MCF 10A (cell line): ENCODE measurements at regions of chr3 and their contacts with region 1.

Region 1: DNA sequence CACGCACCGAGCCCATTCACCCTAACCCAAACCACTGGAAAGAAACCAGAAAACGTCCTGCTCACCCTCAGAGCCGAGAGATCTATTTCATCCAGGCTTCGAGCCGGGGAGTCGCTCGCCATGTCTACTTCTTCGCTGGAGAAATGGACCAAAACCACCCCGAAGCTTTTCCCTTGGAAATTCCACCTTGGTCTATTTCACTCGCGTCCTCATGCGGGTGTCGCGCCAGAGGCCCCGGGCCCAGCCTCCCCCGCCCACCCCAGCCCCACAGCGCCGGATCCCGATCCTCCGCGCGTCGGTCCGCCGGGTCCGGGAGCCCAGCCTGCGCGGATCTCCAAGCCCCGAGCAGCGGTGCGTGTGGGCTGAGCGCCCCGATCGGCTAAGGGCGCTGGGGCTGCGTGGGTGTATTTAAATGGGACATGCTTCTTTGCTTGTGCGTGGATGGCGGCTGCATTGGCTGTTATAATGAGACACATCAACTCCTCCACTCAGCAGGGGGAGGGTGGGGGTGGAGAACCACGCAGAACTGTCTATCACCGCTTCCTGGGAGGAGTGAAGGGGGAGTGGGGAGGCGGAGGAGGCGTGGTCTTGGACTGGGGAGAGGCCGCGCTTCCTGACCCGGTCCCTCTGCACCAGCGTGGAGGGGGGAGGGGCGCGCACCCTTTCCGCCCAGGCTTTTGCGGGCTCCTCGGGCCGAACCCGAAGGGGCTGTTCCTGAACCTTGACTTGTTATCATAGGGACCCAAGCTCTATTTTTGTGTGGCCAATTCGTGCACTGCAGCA is at the start of gene TNIK:
- DNase-seq: peak; percentile 88
- H3K4me3 Mint-ChIP-seq: peak within 1 kb of the TSS; percentile 90
- H3K27ac Mint-ChIP-seq: peak within 1 kb of the TSS; percentile 86
- H3K4me1 Mint-ChIP-seq: peaks cover 20% of the 10 kb centered on the region
- H3K27me3 Mint-ChIP-seq: no peaks in the 10 kb centered on the region
- CTCF ChIP-seq: peak; percentile 37
- total RNA-seq, gene TNIK: 3.4 and 4.3 TPM in 2 replicates

Region 2: GRCh38 chr3:170171563-170171962 is 1288.6 kb before region 1 on chr3:
- CTCF ChIA-PET with region 1: no interaction called
- POLR2A ChIA-PET with region 1: no interaction called
- intact Hi-C with region 1: no loop called
- DNase-seq: no peak
- H3K4me3 Mint-ChIP-seq: no peak overlapping the region
- H3K27ac Mint-ChIP-seq: no peak overlapping the region
- H3K4me1 Mint-ChIP-seq: peaks cover 6% of the 10 kb centered on the region
- H3K27me3 Mint-ChIP-seq: no peaks in the 10 kb centered on the region
- CTCF ChIP-seq: no peak

Region 3: DNA sequence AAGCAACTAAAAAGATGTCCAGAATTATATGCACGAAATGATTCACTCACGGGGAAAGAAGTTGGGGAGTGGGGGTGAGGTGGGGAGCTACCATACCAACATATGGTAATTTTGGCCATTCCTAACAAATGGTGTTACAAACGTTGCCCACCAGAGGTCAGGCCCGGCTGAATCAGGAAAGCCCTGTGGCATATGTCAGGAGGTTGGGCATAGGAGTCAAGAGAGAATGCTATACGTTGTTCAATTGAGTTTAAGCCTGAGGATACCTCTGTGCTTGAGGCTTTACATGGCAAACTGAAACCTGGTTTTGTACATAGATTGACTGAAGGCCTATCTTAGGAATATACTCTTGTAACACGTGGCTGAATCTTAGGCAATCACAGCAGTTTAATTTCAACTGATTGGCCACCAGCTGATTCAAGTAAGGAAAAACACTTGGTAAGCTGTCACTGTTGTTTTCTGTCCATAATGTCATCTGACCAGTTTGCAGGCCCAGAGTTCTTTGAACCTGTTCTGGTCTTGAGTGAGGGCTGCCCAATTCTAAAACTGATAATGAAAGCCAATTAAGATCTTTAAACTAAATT is 410.2 kb before region 1 on chr3:
- CTCF ChIA-PET with region 1: no interaction called
- POLR2A ChIA-PET with region 1: interaction called, 7 read pairs
- intact Hi-C with region 1: loop called (anchors 2 kb)
- DNase-seq: peak; percentile 77
- H3K4me3 Mint-ChIP-seq: no peak overlapping the region
- H3K27ac Mint-ChIP-seq: peak overlapping the region; percentile 11
- H3K4me1 Mint-ChIP-seq: peaks cover 8% of the 10 kb centered on the region
- H3K27me3 Mint-ChIP-seq: no peaks in the 10 kb centered on the region
- CTCF ChIP-seq: peak; percentile 79

Region 4: GRCh38 chr3:171284308-171285075 is 175.6 kb before region 1 on chr3:
- CTCF ChIA-PET with region 1: interaction called, 3 read pairs
- POLR2A ChIA-PET with region 1: interaction called, 36 read pairs
- intact Hi-C with region 1: loop called (anchors 1 kb)
- DNase-seq: peak; percentile 93
- H3K4me3 Mint-ChIP-seq: peak overlapping the region; percentile 9
- H3K27ac Mint-ChIP-seq: peak overlapping the region; percentile 83
- H3K4me1 Mint-ChIP-seq: peaks cover 29% of the 10 kb centered on the region
- H3K27me3 Mint-ChIP-seq: no peaks in the 10 kb centered on the region
- CTCF ChIP-seq: no peak

Region 5: GRCh38 chr3:171354706-171355582 is 105.2 kb before region 1 on chr3:
- CTCF ChIA-PET with region 1: no interaction called
- POLR2A ChIA-PET with region 1: interaction called, 15 read pairs
- intact Hi-C with region 1: loop called (anchors 5 kb)
- DNase-seq: peak; percentile 47
- H3K4me3 Mint-ChIP-seq: no peak overlapping the region
- H3K27ac Mint-ChIP-seq: peak overlapping the region; percentile 74
- H3K4me1 Mint-ChIP-seq: peaks cover 64% of the 10 kb centered on the region
- H3K27me3 Mint-ChIP-seq: no peaks in the 10 kb centered on the region
- CTCF ChIP-seq: no peak

Region 6: GRCh38 chr3:171566803-171567422 is 106.8 kb after region 1 on chr3:
- CTCF ChIA-PET with region 1: interaction called, 6 read pairs
- POLR2A ChIA-PET with region 1: interaction called, 9 read pairs
- intact Hi-C with region 1: loop called (anchors 2 kb)
- DNase-seq: peak; percentile 56
- H3K4me3 Mint-ChIP-seq: no peak overlapping the region
- H3K27ac Mint-ChIP-seq: no peak overlapping the region
- H3K4me1 Mint-ChIP-seq: no peaks in the 10 kb centered on the region
- H3K27me3 Mint-ChIP-seq: no peaks in the 10 kb centered on the region
- CTCF ChIP-seq: peak; percentile 69